Uterus (tissue), 4 donors: ENCODE measurements at regions of chr16 and their contacts with region 1.

Region 1: DNA sequence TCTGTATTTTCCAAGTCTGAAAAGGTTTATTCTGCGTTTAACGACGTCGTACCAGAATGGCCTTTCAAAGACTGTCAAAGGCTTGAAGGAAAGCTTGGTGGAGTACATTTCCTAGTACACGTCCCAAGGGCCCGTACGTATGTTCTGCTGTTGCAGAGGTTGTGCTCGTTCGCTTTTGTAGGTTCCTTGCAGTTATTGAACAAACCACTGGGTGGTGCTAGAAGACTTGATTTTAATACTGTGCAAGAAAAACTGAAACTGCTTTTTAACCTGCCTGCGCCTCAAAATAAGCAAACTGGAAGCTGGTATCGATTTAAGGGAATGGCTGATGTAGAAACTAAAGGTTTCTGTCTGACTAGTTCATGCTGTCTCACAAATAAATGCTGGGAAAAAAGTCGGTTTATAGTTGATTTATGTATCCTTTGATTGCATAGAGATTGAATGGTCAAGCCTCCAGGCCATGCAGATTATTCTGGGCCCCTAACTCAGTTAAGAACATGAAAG is 54.6 kb downstream of the USP10 start:
- DNase-seq: peak; percentile 55 to 86
- H3K4me3 ChIP-seq: no peak overlapping the region
- H3K27ac ChIP-seq: peak overlapping the region in 1 of 2 donors; percentile 26
- H3K4me1 ChIP-seq: no peaks in the 10 kb centered on the region
- H3K27me3 ChIP-seq: no peaks in the 10 kb centered on the region
- CTCF ChIP-seq: peak; percentile 77 to 94 (median 88)
- POLR2A ChIP-seq: no peak

Region 2: GRCh38 chr16:84952335-84953189 is 198.2 kb after region 1 on chr16:
- intact Hi-C with region 1: loop called (anchors 5 kb)
- DNase-seq: peak; percentile 88 to 89
- H3K4me3 ChIP-seq: no peak overlapping the region
- H3K27ac ChIP-seq: peak overlapping the region; percentile 65 to 68
- H3K4me1 ChIP-seq: peaks cover 5 to 12% of the 10 kb centered on the region in 2 donors
- H3K27me3 ChIP-seq: no peaks in the 10 kb centered on the region
- CTCF ChIP-seq: peak; percentile 85 to 91 (median 89)
- POLR2A ChIP-seq: no peak

Region 3: GRCh38 chr16:84967828-84968227 is 213.4 kb after region 1 on chr16:
- intact Hi-C with region 1: loop called (anchors 5 kb)
- DNase-seq: peak; percentile 69 to 74
- H3K4me3 ChIP-seq: no peak overlapping the region
- H3K27ac ChIP-seq: peak overlapping the region; percentile 1 to 48
- H3K4me1 ChIP-seq: no peaks in the 10 kb centered on the region
- H3K27me3 ChIP-seq: no peaks in the 10 kb centered on the region
- CTCF ChIP-seq: no peak
- POLR2A ChIP-seq: no peak